Activated T-helper 1 cell treated with anti-CD3 and anti-CD28 coated beads, Interleukin-12 subunit alpha, Interleukin-12 subunit beta, Interleukin-2, Interleukin-4 antibody, amounts not matched to agents 30 ng/mL and 10 ng/mL and 1 ng/mL, durations not matched to agents 14 hours and 24 hours and 36 hours (primary cell): ENCODE measurements at regions of chr14 and their contacts with region 1.

Region 1: DNA sequence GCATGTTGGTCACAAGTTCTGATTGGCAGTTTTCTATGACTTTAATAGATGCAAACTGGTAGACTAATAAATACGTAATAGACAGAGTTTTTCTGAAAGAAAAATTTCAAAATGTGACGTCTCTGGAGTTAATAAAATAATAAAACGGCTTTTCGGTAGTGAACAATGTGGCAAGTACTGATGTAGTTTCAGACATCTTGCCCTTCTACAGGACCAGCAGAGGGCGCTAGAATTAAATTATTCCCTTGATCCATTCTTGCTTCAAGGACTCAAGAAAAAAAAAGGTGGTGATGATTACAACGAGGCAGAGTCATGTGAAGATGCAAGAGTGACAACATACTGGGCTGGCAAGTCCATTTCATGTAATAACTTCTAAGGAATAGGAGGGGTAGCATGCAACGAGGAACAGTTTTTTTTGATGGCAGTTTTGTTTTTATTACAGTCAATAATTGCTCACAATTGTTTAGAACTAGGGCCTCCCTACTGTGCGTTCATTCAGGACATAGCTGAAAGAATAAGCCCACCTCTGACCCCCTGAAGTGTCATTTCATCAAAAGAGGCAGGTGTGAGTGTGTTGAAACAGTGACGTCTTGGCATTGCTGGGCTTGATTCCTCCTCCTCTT is 101.0 kb upstream of the GZMB start:
- DNase-seq: no peak
- H3K4me3 Mint-ChIP-seq: no peak overlapping the region
- H3K27ac Mint-ChIP-seq: no peak overlapping the region
- H3K4me1 Mint-ChIP-seq: no peaks in the 10 kb centered on the region
- H3K27me3 Mint-ChIP-seq: peaks cover 13% of the 10 kb centered on the region

Region 2: DNA sequence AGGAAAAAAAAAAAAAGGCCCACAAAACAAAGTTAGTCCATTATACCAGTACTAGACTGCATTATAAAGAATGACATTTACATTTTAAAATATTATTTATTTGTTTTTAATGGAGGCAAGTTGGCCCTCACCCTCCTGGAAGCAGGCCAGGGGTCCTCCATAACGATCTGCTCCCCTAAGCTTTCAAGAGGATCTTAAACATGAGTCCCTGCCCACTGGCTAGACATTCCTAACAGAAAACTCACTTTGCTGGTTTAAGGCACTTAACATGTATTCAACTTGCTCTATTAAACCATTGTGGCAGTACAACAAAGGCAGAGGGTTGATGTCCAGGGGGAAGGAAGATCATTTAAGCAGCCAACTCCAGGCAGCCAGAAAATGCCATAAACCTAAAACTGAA is 203.6 kb after region 1 on chr14:
- intact Hi-C with region 1: no loop called
- DNase-seq: no peak
- H3K4me3 Mint-ChIP-seq: no peak overlapping the region
- H3K27ac Mint-ChIP-seq: no peak overlapping the region
- H3K4me1 Mint-ChIP-seq: no peaks in the 10 kb centered on the region
- H3K27me3 Mint-ChIP-seq: no peaks in the 10 kb centered on the region

Region 3: GRCh38 chr14:24965934-24966578 is 231.1 kb after region 1 on chr14:
- intact Hi-C with region 1: no loop called
- DNase-seq: no peak
- H3K4me3 Mint-ChIP-seq: no peak overlapping the region
- H3K27ac Mint-ChIP-seq: no peak overlapping the region
- H3K4me1 Mint-ChIP-seq: no peaks in the 10 kb centered on the region
- H3K27me3 Mint-ChIP-seq: peaks cover 2% of the 10 kb centered on the region

Region 4: DNA sequence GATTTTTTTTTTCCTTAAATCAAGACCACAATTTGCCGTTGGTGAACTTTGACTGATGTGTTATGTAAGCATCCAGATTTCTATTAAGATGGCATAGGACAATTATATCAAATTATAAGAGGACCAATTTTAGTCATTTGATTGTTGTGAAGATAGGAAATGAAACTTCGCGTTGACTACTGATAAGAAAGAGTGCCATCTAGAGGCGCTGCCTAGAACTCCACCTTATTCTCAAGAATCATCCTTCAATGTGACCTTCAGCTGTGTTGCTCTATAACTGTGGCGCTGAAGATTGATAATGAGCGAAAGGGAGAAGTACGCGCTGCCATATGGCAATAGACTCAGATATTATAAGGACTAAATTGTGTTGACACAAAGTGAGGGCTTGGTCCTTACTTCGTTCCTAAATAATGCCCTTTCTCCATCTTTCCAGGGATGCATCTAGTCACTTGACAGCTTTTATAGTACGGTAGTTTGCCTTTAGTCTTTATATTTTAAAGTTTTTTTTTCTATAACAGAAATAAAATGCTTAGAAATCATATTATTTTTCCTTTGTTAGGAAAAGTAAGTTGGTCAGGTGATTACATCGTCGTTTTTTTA is 665.7 kb after region 1 on chr14:
- intact Hi-C with region 1: loop called (anchors 10 kb)
- DNase-seq: no peak
- H3K4me3 Mint-ChIP-seq: no peak overlapping the region
- H3K27ac Mint-ChIP-seq: no peak overlapping the region
- H3K4me1 Mint-ChIP-seq: no peaks in the 10 kb centered on the region
- H3K27me3 Mint-ChIP-seq: no peaks in the 10 kb centered on the region